AG04449 (cell line): ENCODE measurements at regions of chr17 and their contacts with region 1.

Region 1: GRCh38 chr17:38735161-38735997 is 5.2 kb downstream of the CISD3 start:
- DNase-seq: no peak
- H3K4me3 ChIP-seq: no peak overlapping the region
- CTCF ChIP-seq: peak; percentile 88

Region 2: GRCh38 chr17:38571833-38572668 is 163.3 kb before region 1 on chr17:
- CTCF ChIA-PET with region 1: no interaction called
- POLR2A ChIA-PET with region 1: no interaction called
- DNase-seq: no peak
- H3K4me3 ChIP-seq: no peak overlapping the region
- CTCF ChIP-seq: no peak

Region 3: GRCh38 chr17:38674749-38675615 is 60.4 kb before region 1 on chr17 and contains the start of gene EPOP:
- CTCF ChIA-PET with region 1: interaction called, 84 read pairs
- POLR2A ChIA-PET with region 1: no interaction called
- DNase-seq: no peak
- H3K4me3 ChIP-seq: peak within 1 kb of the TSS; percentile 53
- CTCF ChIP-seq: no peak

Region 4: GRCh38 chr17:38705803-38706504 is 29.4 kb before region 1 on chr17:
- CTCF ChIA-PET with region 1: interaction called, 22 read pairs
- POLR2A ChIA-PET with region 1: interaction called, 4 read pairs
- DNase-seq: no peak
- H3K4me3 ChIP-seq: peak overlapping the region; percentile 76
- CTCF ChIP-seq: no peak

Region 5: DNA sequence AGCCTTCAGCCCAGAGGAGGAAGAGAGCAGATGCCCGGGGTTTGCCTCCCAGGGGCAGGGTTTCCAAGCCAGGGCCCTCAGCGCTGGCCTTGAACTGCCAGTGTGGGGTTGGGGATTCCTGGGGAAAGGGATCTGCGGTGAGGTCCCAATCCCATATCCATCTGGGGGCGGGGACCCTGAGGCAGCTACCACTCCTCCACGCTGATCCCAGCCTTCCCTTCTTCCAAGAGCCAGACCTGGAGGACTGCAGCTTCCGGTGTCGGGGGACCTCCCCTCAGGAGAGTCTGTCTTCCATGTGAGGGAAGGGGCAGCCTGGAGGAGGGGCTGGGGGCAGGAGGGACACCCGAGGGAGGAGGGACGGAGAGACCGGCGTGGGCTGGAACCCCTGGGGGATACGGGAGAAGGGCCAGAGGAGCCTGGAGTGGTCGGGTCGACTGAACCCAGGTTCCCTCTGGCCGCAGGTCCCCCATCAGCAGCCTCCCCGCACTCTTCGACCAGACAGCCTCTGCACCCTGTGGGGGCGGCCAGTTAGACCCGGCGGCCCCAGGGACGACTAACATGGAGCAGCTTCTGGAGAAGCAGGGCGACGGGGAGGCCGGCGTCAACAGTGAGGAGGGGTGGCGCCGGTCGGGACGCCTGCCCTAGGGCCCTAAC is 16.0 kb before region 1 on chr17:
- CTCF ChIA-PET with region 1: interaction called, 27 read pairs
- POLR2A ChIA-PET with region 1: interaction called, 3 read pairs
- DNase-seq: no peak
- H3K4me3 ChIP-seq: no peak overlapping the region
- CTCF ChIP-seq: no peak

Region 6: DNA sequence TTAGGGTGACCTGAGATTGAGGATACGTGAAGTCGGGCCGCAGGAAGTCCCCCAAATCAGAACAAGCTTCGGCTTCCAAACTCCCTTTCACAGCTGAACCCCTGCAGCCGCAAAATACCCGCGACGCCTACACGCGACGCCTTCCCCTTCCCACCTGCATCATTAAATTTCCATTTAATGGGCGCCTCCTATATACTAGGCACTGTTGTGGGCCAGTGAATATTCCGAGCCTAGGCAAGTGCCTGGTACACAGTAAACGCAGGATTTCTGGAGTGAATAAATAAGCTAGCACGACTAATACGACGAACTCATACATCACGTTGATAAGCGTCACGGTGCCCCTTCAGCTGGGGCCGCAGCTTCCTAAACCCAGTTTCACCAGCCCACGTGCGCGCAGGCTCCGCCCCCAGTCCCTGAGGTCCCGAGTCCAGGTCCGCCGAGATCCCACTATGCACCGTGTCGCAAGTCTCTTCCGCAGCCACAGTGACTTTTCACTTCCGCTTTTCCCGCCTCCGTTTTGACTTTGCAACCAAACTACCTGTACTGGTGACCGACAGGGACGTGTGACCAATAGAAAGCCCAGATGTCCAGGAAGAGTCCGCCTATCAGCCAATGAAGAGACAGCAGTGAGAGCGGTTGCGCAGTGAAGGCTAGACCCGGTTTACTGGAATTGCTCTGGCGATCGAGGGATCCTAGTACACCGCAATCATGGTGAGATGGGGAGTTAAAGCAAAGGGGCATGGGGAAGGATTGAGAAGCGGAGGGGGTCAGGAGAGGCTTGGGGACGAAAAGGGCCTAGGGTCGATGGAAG is 16.9 kb after region 1 on chr17 and contains the start of gene PSMB3:
- CTCF ChIA-PET with region 1: interaction called, 78 read pairs
- POLR2A ChIA-PET with region 1: interaction called, 3 read pairs
- DNase-seq: peak; percentile 97
- H3K4me3 ChIP-seq: peak within 1 kb of the TSS; percentile 100
- CTCF ChIP-seq: no peak